ENCODE measurements at regions of chr15 and their contacts with region 1.

Region 1: DNA sequence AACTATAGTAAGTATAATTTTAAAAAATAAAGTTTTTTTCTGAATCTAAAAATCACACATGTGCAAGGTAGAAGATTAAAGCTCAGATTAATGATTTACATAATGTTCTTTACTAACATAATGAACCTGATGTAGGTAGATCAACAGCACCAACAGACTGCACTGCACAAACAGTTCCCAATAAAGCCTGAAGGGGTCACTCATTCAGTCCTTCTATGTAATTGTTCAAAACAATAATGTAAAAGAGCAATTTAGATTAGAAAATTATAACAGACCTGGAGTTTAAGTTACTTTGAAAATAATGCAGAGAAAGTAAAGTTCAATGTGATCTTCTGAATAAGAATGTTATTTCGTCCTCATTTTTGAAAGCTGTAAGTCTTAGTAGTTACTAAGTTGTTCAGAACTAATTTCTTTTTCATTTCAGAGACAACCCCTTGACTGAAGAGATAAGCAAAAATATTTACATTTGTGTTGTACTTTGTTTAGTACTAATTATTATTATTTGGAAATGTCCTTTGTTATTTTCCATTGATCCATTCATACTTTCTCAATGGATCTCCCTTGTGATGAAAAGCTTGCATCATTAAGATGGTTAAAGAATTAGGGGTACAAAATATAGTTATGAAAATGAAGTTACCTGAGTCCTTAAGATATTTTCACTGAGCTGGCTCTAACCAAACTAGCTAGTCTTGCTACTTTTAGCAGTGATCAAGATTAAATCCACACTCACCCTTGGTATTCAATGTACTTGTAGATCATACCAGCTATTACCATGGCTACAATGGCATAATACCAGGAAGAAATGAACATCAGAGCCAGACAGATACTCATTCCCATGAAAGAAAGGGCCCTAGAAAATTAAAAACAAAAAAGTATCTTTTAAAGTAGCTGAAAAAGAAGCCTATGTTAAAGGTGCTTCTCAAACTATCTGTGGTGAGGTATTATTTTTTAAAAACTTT is 16.8 kb downstream of the EMC4 start:
- DNase-seq: no peak
- H3K4me3 ChIP-seq: no peak overlapping the region
- H3K27ac ChIP-seq: no peak overlapping the region
- H3K4me1 ChIP-seq: no peaks in the 10 kb centered on the region
- H3K27me3 ChIP-seq: no peaks in the 10 kb centered on the region
- CTCF ChIP-seq: peak; percentile 3 to 71 (median 61)
- POLR2A ChIP-seq: no peak

Region 2: GRCh38 chr15:34342737-34343575 is 101.3 kb after region 1 on chr15 and contains the starts of genes NOP10 and NUTM1:
- intact Hi-C with region 1: loop called (anchors 10 kb)
- DNase-seq: peak; percentile 89 to 92
- H3K4me3 ChIP-seq: peak within 1 kb of the TSS; percentile 46 to 89 (median 53)
- H3K27ac ChIP-seq: peak within 1 kb of the TSS; percentile 76 to 83 (median 80)
- H3K4me1 ChIP-seq: peaks cover 6 to 18% of the 10 kb centered on the region in 2 donors
- H3K27me3 ChIP-seq: no peaks in the 10 kb centered on the region
- CTCF ChIP-seq: peak; percentile 91 to 97 (median 96)
- POLR2A ChIP-seq: peak in 1 of 2 donors; percentile 83
- total RNA-seq, gene NOP10: 62.6 to 164 (median 142) TPM
- total RNA-seq, gene NUTM1: 0.13 TPM in 1 of 4 donors, not detected in the others

Region 3: GRCh38 chr15:34360310-34360709 is 118.7 kb after region 1 on chr15:
- intact Hi-C with region 1: loop called (anchors 5 kb)
- DNase-seq: no peak
- H3K4me3 ChIP-seq: no peak overlapping the region
- H3K27ac ChIP-seq: no peak overlapping the region
- H3K4me1 ChIP-seq: no peaks in the 10 kb centered on the region
- H3K27me3 ChIP-seq: no peaks in the 10 kb centered on the region
- CTCF ChIP-seq: no peak
- POLR2A ChIP-seq: no peak

Region 4: GRCh38 chr15:34587717-34588674 is 346.3 kb after region 1 on chr15:
- intact Hi-C with region 1: loop called (anchors 10 kb)
- DNase-seq: peak; percentile 70 to 76
- H3K4me3 ChIP-seq: no peak overlapping the region
- H3K27ac ChIP-seq: no peak overlapping the region
- H3K4me1 ChIP-seq: peaks cover 0 to 6% of the 10 kb centered on the region in 2 donors
- H3K27me3 ChIP-seq: no peaks in the 10 kb centered on the region
- CTCF ChIP-seq: peak; percentile 46 to 95 (median 84)
- POLR2A ChIP-seq: peak in 1 of 2 donors; percentile 73

Measured in thyroid gland (tissue), 4 donors.